ENCODE measurements at regions of chr2 and their contacts with region 1.

Region 1: GRCh38 chr2:59932341-59932740 is 621.1 kb downstream of the BCL11A start:
- DNase-seq: no peak
- ATAC-seq: no peak
- H3K4me3 ChIP-seq: no peak overlapping the region
- H3K4me3 Mint-ChIP-seq: no peak overlapping the region
- H3K27ac ChIP-seq: no peak overlapping the region
- H3K27ac Mint-ChIP-seq: no peak overlapping the region
- H3K4me1 ChIP-seq: no peaks in the 10 kb centered on the region
- H3K4me1 Mint-ChIP-seq: peaks cover 0 to 8% (median 4%) of the 10 kb centered on the region in 7 donors
- H3K27me3 ChIP-seq: no peaks in the 10 kb centered on the region
- H3K27me3 Mint-ChIP-seq: no peaks in the 10 kb centered on the region

Region 2: DNA sequence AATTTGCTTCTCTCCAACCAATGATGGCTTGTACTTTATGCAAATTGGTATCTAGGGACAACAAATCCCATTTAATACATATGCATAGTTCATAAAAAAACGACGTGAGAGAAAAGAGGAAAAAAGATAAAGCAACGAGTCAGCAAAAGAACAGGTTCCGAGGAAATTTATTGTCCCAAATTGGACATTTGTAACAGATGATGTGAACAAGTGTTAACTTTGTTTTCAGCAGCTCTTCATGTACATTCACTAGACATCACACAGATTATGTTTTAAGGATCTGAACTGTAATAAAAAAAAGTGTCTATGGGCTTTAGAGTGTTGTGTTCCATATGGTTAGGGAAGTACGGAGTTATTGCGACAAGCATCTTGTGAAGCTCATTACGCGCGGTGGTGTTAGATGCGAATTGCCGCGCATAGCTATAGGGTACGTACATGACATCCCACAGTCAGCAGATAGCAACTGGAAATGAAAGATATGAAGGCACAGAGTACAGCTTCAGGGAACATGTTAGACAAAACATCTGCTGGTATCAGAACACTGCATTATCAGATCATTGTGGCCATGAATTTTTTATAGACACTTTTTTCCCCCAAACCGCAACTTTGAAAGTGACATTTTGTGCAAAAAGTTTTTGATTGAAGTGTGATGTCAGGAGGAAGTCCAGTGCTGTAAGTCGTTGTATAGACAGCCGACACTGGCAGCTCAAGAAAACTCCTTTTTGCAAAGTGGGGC is 618.1 kb before region 1 on chr2:
- CTCF ChIA-PET with region 1: no interaction called
- POLR2A ChIA-PET with region 1: no interaction called
- intact Hi-C with region 1: loop called in 1 of 2 experiments (anchors 5 kb)
- DNase-seq: peak in 3 of 9 donors; percentile 3 to 9 (median 7)
- ATAC-seq: no peak
- H3K4me3 ChIP-seq: no peak overlapping the region
- H3K4me3 Mint-ChIP-seq: peak overlapping the region in 2 of 10 donors; percentile 12 to 23
- H3K27ac ChIP-seq: no peak overlapping the region
- H3K27ac Mint-ChIP-seq: no peak overlapping the region
- H3K4me1 ChIP-seq: no peaks in the 10 kb centered on the region
- H3K4me1 Mint-ChIP-seq: peaks cover 0 to 7% (median 5%) of the 10 kb centered on the region in 7 donors
- H3K27me3 ChIP-seq: no peaks in the 10 kb centered on the region
- H3K27me3 Mint-ChIP-seq: peaks cover 10 to 48% (median 29%) of the 10 kb centered on the region in 5 donors

Region 3: DNA sequence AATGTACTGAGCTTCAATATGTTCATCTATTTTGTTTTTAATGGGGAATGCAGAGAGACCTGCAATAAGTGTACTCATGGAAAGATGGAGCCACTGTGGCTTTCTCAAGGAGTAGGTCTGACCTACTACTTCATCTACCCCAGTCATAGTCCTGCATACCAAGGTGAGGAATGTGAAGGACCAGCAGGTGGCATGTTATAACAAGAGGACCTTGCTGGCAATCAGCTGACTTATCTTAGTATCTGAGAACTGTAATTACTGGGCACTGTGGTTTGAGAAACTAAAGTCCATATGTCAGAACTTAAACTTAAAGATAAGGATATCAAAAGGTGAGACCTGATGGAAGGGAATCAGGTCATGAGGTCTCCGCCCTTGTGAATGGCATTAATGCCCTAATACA is 483.1 kb before region 1 on chr2:
- CTCF ChIA-PET with region 1: no interaction called
- POLR2A ChIA-PET with region 1: no interaction called
- intact Hi-C with region 1: loop called in 1 of 2 experiments (anchors 5 kb)
- DNase-seq: peak in 1 of 9 donors; percentile 1
- ATAC-seq: no peak
- H3K4me3 ChIP-seq: no peak overlapping the region
- H3K4me3 Mint-ChIP-seq: no peak overlapping the region
- H3K27ac ChIP-seq: no peak overlapping the region
- H3K27ac Mint-ChIP-seq: no peak overlapping the region
- H3K4me1 ChIP-seq: no peaks in the 10 kb centered on the region
- H3K4me1 Mint-ChIP-seq: no peaks in the 10 kb centered on the region
- H3K27me3 ChIP-seq: no peaks in the 10 kb centered on the region
- H3K27me3 Mint-ChIP-seq: peaks cover 0 to 9% (median 0%) of the 10 kb centered on the region in 5 donors

Measured in naive thymus-derived CD4-positive, alpha-beta T cell (primary cell).